Esophagus muscularis mucosa (tissue), 4 donors: ENCODE measurements at regions of chr1 and their contacts with region 1.

Region 1: GRCh38 chr1:204128964-204129896 is 22.6 kb downstream of the ETNK2 start:
- DNase-seq: no peak
- H3K4me3 ChIP-seq: peak overlapping the region; percentile 19 to 41 (median 26)
- H3K27ac ChIP-seq: peak overlapping the region; percentile 17 to 71 (median 32)
- H3K4me1 ChIP-seq: peaks cover 22 to 57% (median 54%) of the 10 kb centered on the region in 4 donors
- H3K27me3 ChIP-seq: no peaks in the 10 kb centered on the region
- CTCF ChIP-seq: peak; percentile 80 to 92 (median 88)
- EP300 ChIP-seq: no peak
- POLR2A ChIP-seq: no peak

Region 2: GRCh38 chr1:203888807-203889251 is 240.4 kb before region 1 on chr1:
- intact Hi-C with region 1: no loop called
- DNase-seq: no peak
- H3K4me3 ChIP-seq: no peak overlapping the region
- H3K27ac ChIP-seq: no peak overlapping the region
- H3K4me1 ChIP-seq: no peaks in the 10 kb centered on the region
- H3K27me3 ChIP-seq: no peaks in the 10 kb centered on the region
- CTCF ChIP-seq: no peak
- EP300 ChIP-seq: no peak
- POLR2A ChIP-seq: no peak

Region 3: GRCh38 chr1:204072931-204073836 is 56.0 kb before region 1 on chr1 and contains the start of gene SOX13:
- intact Hi-C with region 1: loop called (anchors 5 kb)
- DNase-seq: peak; percentile 95
- H3K4me3 ChIP-seq: peak within 1 kb of the TSS; percentile 63 to 77 (median 65)
- H3K27ac ChIP-seq: peak within 1 kb of the TSS; percentile 73 to 86 (median 80)
- H3K4me1 ChIP-seq: peaks cover 16 to 58% (median 57%) of the 10 kb centered on the region in 4 donors
- H3K27me3 ChIP-seq: peaks cover 0 to 45% (median 6%) of the 10 kb centered on the region in 4 donors
- CTCF ChIP-seq: peak in 1 of 3 experiments; percentile 12
- EP300 ChIP-seq: no peak
- POLR2A ChIP-seq: peak; percentile 60
- total RNA-seq, gene SOX13: 13.3 to 25.6 (median 21.7) TPM